HepG2 (cell line): ENCODE measurements at regions of chr3 and their contacts with region 1.

Region 1: DNA sequence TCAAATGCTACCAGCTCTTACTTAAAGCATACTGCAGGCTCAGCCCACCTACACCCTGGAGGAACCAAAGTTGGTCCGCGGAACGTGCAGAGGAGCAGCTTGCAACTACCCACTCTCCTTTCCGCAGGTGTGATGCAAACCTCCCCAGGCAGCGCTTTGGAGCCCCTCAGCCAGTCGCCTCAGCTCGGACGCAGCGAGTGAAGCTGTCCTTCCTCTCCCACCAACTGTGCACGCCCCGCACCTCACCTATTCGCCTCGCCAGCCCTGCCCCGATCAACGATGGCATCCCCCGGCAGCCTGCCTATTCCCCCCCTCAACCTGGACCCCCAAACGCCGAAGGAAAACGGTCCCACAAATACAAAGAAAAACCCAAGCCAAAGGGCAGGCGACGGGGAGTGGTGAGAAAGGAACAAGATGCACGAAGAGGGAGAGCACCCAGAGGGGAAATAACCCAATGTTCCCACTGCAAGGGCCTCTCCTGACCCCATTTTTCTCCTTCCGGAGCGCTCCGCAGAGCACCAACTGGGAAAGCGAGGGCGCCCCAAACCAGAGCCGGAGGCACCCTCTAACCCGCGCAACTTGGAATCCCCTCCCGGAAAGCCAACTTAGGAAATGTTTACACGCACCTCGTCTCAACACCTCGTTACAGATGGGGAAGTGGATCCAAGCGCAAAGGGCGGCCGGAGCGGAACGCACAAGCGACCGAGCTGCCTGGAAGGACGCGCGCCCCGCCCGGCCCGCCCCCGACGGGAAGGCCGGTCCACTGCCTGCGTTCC is 665 bp downstream of the GLB1 start:
- DNase-seq: peak; percentile 17
- ATAC-seq: peak; percentile 52
- H3K4me3 ChIP-seq: peak overlapping the region; percentile 86 to 98 (median 86)
- H3K27ac ChIP-seq: peak overlapping the region; percentile 98
- H3K4me1 ChIP-seq: peaks cover 45% of the 10 kb centered on the region
- H3K27me3 ChIP-seq: no peaks in the 10 kb centered on the region; a peak in 1 of 5 replicates
- CTCF ChIP-seq: no peak
- EP300 ChIP-seq: no peak
- POLR2A ChIP-seq: no peak
- RAD21 ChIP-seq: no peak

Region 2: DNA sequence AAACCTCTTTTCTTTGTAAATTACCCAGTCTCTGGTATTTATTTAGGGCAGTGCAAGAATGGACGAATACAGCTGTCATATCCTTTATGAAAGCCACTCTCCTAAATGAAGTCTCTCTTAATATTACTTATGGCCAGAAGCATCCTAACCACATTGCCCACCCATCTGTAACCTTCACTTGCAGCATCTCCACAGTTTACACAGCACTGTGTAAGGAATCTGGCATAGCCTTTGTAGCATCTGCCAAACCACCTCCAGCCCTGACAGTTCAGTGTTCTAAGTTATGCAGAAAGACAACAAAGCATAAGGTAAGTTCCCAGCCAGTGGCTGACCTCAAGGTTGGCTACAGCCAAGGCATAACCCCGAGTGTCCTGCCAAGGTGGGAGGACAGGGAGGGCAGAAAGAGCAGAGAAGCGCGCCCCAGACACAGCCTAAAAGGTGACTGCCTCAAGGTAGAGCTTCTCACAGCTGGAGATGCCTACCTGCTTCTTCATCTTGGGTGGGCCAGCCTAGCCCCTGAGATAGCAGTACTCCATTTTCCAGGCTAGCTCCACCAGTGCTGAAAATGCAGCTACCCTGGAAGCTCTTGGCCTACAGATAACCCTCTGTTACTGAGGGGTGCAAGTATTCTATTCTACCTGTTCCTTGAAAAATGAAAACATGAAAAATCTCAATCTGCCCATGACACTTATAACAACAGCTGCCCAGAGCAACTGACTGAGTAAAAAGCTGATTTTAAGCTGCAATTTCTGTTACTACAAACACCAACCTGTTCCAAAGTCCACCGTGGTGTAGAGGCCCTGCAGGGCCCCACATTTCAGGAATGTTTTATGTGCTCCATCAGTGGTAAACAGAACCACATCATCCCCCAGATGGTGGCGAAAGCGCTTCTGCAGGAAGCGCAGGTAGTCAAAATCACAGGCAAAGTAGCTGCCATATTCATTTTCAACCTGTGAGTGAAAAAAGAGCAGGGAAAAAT is 38.7 kb before region 1 on chr3:
- CTCF ChIA-PET with region 1: no interaction called
- POLR2A ChIA-PET with region 1: interaction called, 14 read pairs
- in situ Hi-C with region 1: no loop called
- intact Hi-C with region 1: no loop called
- DNase-seq: peak; percentile 94
- ATAC-seq: peak; percentile 95
- H3K4me3 ChIP-seq: peak overlapping the region; percentile 4 to 58 (median 37); a peak in 5 of 6 replicates
- H3K27ac ChIP-seq: peak overlapping the region; percentile 97
- H3K4me1 ChIP-seq: peaks cover 30% of the 10 kb centered on the region
- H3K27me3 ChIP-seq: no peaks in the 10 kb centered on the region
- CTCF ChIP-seq: peak; percentile 33
- EP300 ChIP-seq: peak; percentile 53 to 89; a peak in 3 of 4 replicates
- POLR2A ChIP-seq: peak in 1 of 2 experiments; percentile 69; a peak in 1 of 4 replicates
- RAD21 ChIP-seq: peak; percentile 51; the same call in 1 of the 2 replicates

Region 3: GRCh38 chr3:33113772-33114621 is 17.7 kb after region 1 on chr3 and contains the start of gene CRTAP:
- CTCF ChIA-PET with region 1: no interaction called
- POLR2A ChIA-PET with region 1: interaction called, 13 read pairs
- in situ Hi-C with region 1: no loop called
- intact Hi-C with region 1: loop called (anchors 2 kb)
- DNase-seq: peak; percentile 81
- ATAC-seq: peak; percentile 95
- H3K4me3 ChIP-seq: peak within 1 kb of the TSS; percentile 78 to 94 (median 90)
- H3K27ac ChIP-seq: peak within 1 kb of the TSS; percentile 93
- H3K4me1 ChIP-seq: peaks cover 31% of the 10 kb centered on the region
- H3K27me3 ChIP-seq: no peaks in the 10 kb centered on the region; a peak in 2 of 5 replicates
- CTCF ChIP-seq: no peak; the same call in 1 of the 2 replicates
- EP300 ChIP-seq: no peak
- POLR2A ChIP-seq: peak; percentile 51 to 76
- RAD21 ChIP-seq: peak; percentile 50; the same call in 1 of the 2 replicates
- total RNA-seq, gene CRTAP: 46.1 and 54.2 TPM in 2 replicates